BJ (cell line): ENCODE measurements at regions of chr6 and their contacts with region 1.

Region 1: DNA sequence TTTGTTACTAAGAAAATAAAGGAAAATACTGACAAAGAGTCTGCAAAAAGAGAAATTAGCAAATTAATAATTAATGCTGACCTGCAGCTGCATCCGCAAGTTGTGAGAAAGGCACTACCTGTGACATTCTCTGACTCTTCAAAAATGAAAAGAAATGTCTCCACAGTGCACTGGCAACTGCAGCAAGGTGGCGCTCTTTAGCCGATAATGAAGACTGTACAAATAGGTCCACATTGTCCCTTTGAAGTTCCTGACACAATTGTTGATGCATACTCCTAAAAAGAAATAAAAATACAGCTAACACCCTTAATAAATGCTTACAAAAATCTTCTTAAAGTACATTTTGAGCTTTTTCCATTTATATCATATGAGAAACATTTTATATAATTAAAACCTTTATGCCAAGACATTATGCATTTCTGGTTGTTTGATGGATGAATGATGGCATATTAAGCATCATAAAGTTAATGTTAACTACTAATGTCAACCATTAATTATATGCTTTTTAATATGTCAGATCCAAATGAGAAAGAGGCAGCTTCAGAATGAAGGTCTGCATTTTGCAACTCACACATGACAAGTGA is 96.5 kb downstream of the MMS22L start:
- DNase-seq: no peak
- H3K4me3 ChIP-seq: no peak overlapping the region
- H3K27me3 ChIP-seq: no peaks in the 10 kb centered on the region
- CTCF ChIP-seq: peak; percentile 85

Region 2: GRCh38 chr6:96992343-96992730 is 194.2 kb before region 1 on chr6:
- CTCF ChIA-PET with region 1: no interaction called
- POLR2A ChIA-PET with region 1: no interaction called
- DNase-seq: no peak
- H3K4me3 ChIP-seq: no peak overlapping the region
- H3K27me3 ChIP-seq: no peaks in the 10 kb centered on the region
- CTCF ChIP-seq: no peak

Region 3: DNA sequence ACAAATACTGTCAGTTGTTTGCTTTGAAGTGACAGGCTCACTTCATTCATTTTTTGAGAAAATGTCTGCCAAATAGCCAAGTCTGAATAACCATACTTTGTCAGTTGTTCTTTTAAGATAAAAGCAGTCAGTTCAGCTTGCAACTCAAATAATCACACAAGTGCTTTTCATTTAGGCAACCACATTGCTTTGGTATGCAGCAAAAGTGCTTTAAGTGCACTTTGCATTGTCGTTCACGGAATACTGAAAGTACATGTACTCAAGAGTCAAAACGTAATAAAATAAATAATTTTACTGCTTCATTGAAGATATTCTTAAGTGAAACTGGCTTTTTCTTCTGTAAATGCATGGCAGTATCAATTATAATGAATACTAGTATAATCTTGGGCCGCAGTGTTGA is 10.7 kb before region 1 on chr6:
- CTCF ChIA-PET with region 1: interaction called, 13 read pairs
- POLR2A ChIA-PET with region 1: no interaction called
- DNase-seq: no peak
- H3K4me3 ChIP-seq: no peak overlapping the region
- H3K27me3 ChIP-seq: no peaks in the 10 kb centered on the region
- CTCF ChIP-seq: no peak

Region 4: DNA sequence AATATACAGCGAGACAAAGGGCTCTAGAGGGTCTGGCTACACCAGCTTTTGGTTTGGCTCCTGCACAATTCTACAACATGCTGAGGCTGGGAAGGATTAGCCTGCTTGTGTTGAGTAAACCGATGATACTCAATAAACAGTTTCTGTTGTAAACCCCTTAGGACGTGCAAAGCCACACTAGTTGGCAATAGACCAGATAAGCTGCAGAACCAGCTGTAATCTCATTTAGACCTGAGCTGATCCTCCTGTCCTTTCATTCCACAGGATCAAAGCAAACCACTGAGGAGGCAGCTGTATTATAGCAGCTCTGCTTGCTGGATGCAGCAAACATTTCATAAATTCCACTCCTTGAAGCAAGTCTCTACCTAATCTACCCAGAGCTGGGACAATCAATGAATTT is 16.8 kb after region 1 on chr6:
- CTCF ChIA-PET with region 1: interaction called, 28 read pairs
- POLR2A ChIA-PET with region 1: no interaction called
- DNase-seq: no peak
- H3K4me3 ChIP-seq: no peak overlapping the region
- H3K27me3 ChIP-seq: no peaks in the 10 kb centered on the region
- CTCF ChIP-seq: no peak

Region 5: GRCh38 chr6:97215157-97215769 is 28.8 kb after region 1 on chr6:
- CTCF ChIA-PET with region 1: interaction called, 16 read pairs
- POLR2A ChIA-PET with region 1: no interaction called
- DNase-seq: peak; percentile 22
- H3K4me3 ChIP-seq: no peak overlapping the region
- H3K27me3 ChIP-seq: no peaks in the 10 kb centered on the region
- CTCF ChIP-seq: peak; percentile 69

Region 6: DNA sequence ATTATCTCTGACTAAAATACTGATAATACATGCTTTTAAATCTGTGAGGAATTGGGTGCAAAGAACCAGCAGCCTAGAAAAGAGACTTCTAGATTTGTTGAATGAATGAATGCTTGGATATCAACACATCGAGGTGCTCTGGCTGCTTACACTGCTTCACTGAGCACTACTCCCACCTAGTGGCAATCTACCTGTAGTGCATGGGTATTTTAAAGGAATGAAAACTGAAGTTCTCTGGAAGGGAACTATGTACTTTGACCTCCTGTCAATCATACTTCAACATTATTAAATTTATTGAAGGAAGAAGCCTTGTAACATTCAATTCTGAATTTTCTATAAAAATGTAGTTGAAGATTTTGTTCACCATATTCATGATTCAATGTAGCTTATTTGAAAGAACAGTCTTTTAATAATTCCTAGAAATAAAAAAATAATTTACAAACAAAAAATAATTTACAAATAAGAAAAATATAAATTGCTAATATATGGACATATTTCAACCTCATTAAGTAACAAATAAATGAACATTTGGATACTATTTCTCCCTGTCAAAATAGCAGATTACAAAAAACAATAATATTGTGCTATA is 207.7 kb after region 1 on chr6:
- CTCF ChIA-PET with region 1: interaction called, 22 read pairs
- POLR2A ChIA-PET with region 1: no interaction called
- DNase-seq: no peak
- H3K4me3 ChIP-seq: no peak overlapping the region
- H3K27me3 ChIP-seq: peaks cover 2% of the 10 kb centered on the region; the same call in 1 of the 2 replicates
- CTCF ChIP-seq: peak; percentile 85

Region 7: DNA sequence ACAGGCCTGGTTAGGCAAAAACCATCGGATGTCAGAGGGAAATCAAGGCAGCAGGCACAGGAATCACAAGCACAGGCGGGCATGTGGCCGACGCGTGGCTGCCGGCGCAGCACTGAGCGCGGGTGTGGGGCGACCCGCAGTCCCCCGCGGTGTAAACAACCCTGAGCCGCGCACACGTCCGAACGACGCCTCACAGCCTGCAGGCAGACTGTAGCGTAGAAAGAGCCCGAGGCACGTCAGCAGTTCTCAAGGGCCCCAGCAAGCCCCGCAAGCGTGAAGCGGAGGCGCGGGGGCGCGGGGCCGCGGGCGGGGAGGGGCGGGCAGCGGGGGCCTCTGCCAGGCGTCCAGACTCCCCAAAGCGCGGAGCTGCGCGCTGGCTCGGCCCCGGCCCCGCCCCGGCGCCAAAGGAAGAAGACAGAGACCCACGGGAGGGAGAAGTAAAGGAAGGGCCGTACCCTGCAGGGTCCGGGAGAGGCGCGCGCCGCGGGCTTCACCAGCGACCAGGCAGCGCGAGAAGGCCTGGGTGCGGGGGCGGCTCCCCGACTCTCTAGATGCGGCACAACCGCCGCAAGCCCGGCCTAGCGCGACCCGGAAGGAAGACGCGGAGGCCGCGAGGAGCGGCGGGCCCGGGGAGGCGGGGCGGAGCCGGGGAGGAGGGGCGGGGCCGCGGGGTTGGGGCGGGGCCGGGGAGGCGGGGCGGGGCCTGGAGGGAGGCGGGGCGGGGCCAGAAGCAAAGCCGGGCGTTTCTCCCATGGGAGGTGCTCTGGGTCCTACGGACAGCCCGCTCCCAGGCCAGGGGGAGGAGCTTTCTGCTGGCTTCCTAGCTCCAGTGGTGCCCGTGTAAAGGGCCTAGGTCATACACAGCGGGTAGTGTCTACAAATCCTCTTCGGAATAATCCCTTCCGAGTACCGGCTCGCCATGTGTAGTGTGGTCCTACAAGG is 1761.1 kb after region 1 on chr6 and contains the start of gene FBXL4:
- CTCF ChIA-PET with region 1: no interaction called
- POLR2A ChIA-PET with region 1: interaction called, 10 read pairs
- DNase-seq: no peak
- H3K4me3 ChIP-seq: peak within 1 kb of the TSS; percentile 70
- H3K27me3 ChIP-seq: no peaks in the 10 kb centered on the region
- CTCF ChIP-seq: no peak
- polyA plus RNA-seq, gene FBXL4: 10.5 and 17.8 TPM in 2 replicates